ENCODE measurements at regions of chr2 and their contacts with region 1.

Region 1: GRCh38 chr2:205902056-205902899 is 183.7 kb downstream of the INO80D start:
- DNase-seq: peak in 1 of 3 donors; percentile 16
- H3K4me3 ChIP-seq: no peak overlapping the region
- H3K27ac ChIP-seq: no peak overlapping the region
- H3K4me1 ChIP-seq: no peaks in the 10 kb centered on the region
- H3K27me3 ChIP-seq: peaks cover 0 to 4% (median 0%) of the 10 kb centered on the region in 5 experiments

Region 2: GRCh38 chr2:205885492-205886099 is 16.7 kb before region 1 on chr2:
- CTCF ChIA-PET with region 1: interaction called, 10 read pairs
- POLR2A ChIA-PET with region 1: interaction called, 3 read pairs
- DNase-seq: peak; percentile 57 to 74 (median 66)
- H3K4me3 ChIP-seq: no peak overlapping the region
- H3K27ac ChIP-seq: no peak overlapping the region
- H3K4me1 ChIP-seq: no peaks in the 10 kb centered on the region
- H3K27me3 ChIP-seq: no peaks in the 10 kb centered on the region

Measured in common myeloid progenitor, CD34-positive (primary cell).